CD8-positive, alpha-beta T cell (primary cell): ENCODE measurements at regions of chr2 and their contacts with region 1.

Region 1: DNA sequence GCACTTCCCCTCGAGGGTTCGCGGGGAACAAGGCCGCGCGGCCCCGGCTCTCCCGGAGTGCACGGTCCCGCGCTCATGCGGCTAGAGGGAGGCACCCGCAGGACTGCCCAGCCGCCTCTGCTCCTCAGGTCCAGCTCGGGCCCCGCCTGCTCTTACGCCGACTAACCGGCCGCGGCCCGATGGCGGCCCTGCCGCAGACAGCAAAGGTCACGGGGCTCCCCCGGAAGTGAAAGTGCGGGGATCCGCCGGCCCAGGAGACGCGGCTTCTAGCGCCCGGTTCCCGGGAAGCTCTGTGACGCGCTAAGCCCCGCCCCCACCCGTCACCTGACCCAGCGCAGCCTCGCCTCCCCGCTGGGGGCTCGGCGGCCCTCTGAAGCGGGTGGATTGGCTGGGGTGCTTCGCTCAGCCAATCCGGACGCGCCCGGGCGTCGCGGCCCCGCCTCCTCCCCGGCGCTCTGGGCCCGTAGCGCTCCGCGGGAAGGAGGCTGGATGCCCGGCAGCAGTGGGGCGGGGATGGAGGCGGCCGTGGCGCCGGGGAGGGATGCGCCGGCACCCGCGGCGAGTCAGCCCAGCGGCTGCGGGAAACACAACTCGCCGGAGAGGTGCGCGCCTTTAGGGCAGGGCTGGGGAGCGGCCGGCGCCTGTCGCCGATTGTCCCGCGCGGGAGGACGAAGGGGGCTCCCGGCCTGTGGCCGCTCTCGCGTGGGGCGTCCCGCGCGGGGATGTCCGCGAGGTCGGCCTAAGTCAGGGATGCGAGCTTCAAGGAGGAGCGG is at the start of gene SCLY:
- DNase-seq: peak; percentile 90 to 99 (median 96)
- ATAC-seq: peak; percentile 97
- H3K4me3 ChIP-seq: peak within 1 kb of the TSS; percentile 77 to 88
- H3K4me3 Mint-ChIP-seq: peak within 1 kb of the TSS; percentile 81
- H3K27ac ChIP-seq: peak within 1 kb of the TSS; percentile 81 to 83
- H3K27ac Mint-ChIP-seq: peak within 1 kb of the TSS; percentile 89
- H3K4me1 ChIP-seq: peaks cover 16% of the 10 kb centered on the region
- H3K4me1 Mint-ChIP-seq: peaks cover 39% of the 10 kb centered on the region
- H3K27me3 ChIP-seq: no peaks in the 10 kb centered on the region
- H3K27me3 Mint-ChIP-seq: peaks cover 3% of the 10 kb centered on the region
- CTCF ChIP-seq: no peak
- total RNA-seq, gene SCLY: 5.8 to 11.8 TPM

Region 2: DNA sequence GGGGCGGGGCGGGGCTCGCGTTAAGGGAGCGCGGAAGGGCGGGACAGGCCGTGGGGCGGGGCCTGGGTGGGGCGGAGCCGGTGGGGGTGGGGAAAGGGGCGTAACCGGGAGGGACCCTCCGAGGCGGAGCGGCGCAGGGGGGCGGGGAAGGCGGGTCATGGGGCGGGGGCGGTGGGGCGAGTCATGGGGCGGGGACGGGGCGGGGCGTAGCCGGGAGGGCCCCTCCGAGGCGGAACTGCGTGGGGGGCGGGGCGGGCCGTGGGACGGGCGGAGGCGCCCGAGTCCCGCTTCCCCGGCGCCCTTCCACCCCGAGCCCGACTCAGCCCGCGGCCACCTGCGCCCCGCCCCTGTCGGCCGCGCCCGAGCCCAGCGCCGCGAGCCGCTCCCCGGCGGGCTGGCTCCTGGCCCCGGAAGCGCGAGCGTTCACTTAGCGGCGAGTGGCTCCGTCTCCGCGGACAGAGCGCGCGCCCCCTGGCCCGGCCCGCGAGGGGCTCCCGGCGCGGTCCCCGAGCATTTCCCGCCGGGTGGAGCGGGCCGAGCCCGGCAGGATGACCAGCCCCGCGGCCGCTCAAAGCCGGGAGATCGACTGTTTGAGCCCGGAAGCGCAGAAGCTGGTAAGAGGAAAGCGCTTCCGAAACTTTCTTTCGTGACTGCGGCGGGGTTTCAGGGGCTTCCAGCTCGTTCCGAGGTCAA is 368.7 kb before region 1 on chr2:
- CTCF ChIA-PET with region 1: no interaction called
- POLR2A ChIA-PET with region 1: no interaction called
- intact Hi-C with region 1: loop called in 1 of 2 experiments (anchors 1 kb)
- DNase-seq: peak; percentile 91 to 97 (median 95)
- ATAC-seq: peak; percentile 58
- H3K4me3 ChIP-seq: peak overlapping the region; percentile 80 to 85
- H3K4me3 Mint-ChIP-seq: peak overlapping the region; percentile 81
- H3K27ac ChIP-seq: peak overlapping the region; percentile 81 to 90
- H3K27ac Mint-ChIP-seq: peak overlapping the region; percentile 89
- H3K4me1 ChIP-seq: peaks cover 75% of the 10 kb centered on the region
- H3K4me1 Mint-ChIP-seq: peaks cover 75% of the 10 kb centered on the region
- H3K27me3 ChIP-seq: no peaks in the 10 kb centered on the region
- H3K27me3 Mint-ChIP-seq: no peaks in the 10 kb centered on the region
- CTCF ChIP-seq: no peak

Region 3: GRCh38 chr2:238231251-238231793 is 170.6 kb after region 1 on chr2:
- CTCF ChIA-PET with region 1: no interaction called
- POLR2A ChIA-PET with region 1: no interaction called
- intact Hi-C with region 1: loop called (anchors 2 to 10 kb)
- DNase-seq: peak; percentile 61 to 89 (median 81)
- ATAC-seq: peak; percentile 88
- H3K4me3 ChIP-seq: peak overlapping the region; percentile 49 to 79
- H3K4me3 Mint-ChIP-seq: peak overlapping the region; percentile 86
- H3K27ac ChIP-seq: peak overlapping the region in 1 of 2 experiments; percentile 10
- H3K27ac Mint-ChIP-seq: no peak overlapping the region
- H3K4me1 ChIP-seq: peaks cover 20% of the 10 kb centered on the region
- H3K4me1 Mint-ChIP-seq: peaks cover 25% of the 10 kb centered on the region
- H3K27me3 ChIP-seq: no peaks in the 10 kb centered on the region
- H3K27me3 Mint-ChIP-seq: peaks cover 19% of the 10 kb centered on the region
- CTCF ChIP-seq: no peak

Region 4: DNA sequence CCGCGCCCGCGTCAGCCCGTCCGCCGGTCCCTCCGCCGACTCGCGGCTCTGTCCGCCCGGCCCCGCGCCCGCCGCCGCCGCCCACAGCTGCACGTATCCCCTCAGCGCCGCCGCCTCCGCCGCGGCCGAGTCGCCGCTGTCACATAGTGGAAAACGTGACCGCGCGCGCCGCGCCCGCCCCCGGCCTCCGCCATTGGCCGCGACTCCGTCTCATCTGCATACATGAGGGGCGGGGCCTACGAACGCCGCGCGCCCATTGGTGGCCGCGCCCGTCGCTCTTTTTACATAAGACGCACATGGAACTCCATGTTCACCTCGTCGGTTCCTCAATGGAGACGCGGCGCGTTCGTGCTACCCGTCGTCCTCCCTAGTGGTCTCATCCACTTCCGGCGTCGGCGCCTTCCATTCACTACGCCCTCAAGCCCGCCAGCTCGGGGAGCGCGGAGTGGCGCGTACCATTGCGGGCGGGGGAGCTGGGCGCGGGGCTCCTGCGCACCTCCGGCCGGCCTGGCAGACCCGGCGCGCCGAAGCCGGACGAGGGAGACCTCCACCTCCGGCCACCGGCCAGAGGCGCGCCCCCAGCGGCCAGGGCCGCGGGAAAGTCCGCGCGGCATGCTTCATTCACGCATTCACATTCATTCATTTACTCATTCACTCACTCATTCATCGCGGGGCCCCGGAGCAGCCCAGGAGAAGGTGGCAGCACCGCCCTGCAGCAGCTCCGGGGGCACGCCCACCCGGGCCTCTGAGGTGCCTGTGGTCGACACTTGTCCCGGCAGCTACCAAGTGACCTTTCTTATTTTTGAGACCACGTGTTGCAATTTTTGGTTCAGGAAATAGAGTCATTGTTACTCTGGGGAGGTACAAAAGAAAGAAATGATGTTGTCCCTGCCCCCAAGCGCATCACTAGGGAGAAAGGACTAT is 228.2 kb after region 1 on chr2:
- CTCF ChIA-PET with region 1: no interaction called
- POLR2A ChIA-PET with region 1: no interaction called
- intact Hi-C with region 1: loop called in 1 of 2 experiments (anchors 2 kb)
- DNase-seq: peak; percentile 94 to 99 (median 97)
- ATAC-seq: peak; percentile 85
- H3K4me3 ChIP-seq: peak overlapping the region; percentile 53 to 66
- H3K4me3 Mint-ChIP-seq: peak overlapping the region; percentile 91
- H3K27ac ChIP-seq: peak overlapping the region; percentile 78 to 91
- H3K27ac Mint-ChIP-seq: peak overlapping the region; percentile 96
- H3K4me1 ChIP-seq: peaks cover 25% of the 10 kb centered on the region
- H3K4me1 Mint-ChIP-seq: peaks cover 38% of the 10 kb centered on the region
- H3K27me3 ChIP-seq: no peaks in the 10 kb centered on the region
- H3K27me3 Mint-ChIP-seq: no peaks in the 10 kb centered on the region
- CTCF ChIP-seq: no peak

Region 5: DNA sequence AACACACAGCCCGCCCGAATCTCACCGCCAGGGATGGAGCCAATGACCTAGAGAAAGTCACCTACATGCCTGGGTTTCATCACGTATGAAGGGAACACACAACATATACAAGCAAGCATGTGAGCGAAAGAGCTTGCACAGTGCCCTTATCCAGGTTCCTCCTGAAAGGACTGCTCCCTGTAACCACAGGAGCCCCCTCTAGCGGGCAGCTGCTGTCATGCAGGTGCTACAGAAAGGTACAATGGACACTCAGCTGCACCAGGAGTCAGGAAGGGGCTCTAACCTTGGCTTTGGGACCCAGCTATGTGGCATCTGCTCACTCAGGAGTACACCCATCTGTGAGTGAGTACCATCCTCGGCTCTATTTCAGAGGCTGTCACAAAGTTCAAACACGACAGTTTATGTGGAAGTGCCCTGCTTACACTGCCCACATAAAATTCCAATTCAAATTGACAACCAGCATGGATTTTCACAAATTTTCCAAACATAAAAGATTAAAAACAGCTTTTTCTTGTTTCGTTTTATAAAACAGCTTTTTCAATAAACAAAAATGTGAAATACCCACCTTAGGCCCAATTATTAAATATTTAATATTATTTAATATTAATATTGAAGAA is 1960.9 kb after region 1 on chr2:
- CTCF ChIA-PET with region 1: no interaction called
- POLR2A ChIA-PET with region 1: no interaction called
- intact Hi-C with region 1: loop called in 1 of 2 experiments (anchors 10 kb)
- DNase-seq: peak; percentile 15 to 72 (median 64)
- ATAC-seq: peak; percentile 35
- H3K4me3 ChIP-seq: no peak overlapping the region
- H3K4me3 Mint-ChIP-seq: no peak overlapping the region
- H3K27ac ChIP-seq: no peak overlapping the region
- H3K27ac Mint-ChIP-seq: no peak overlapping the region
- H3K4me1 ChIP-seq: peaks cover 14% of the 10 kb centered on the region
- H3K4me1 Mint-ChIP-seq: peaks cover 29% of the 10 kb centered on the region
- H3K27me3 ChIP-seq: no peaks in the 10 kb centered on the region
- H3K27me3 Mint-ChIP-seq: no peaks in the 10 kb centered on the region
- CTCF ChIP-seq: peak; percentile 82